ENCODE measurements at regions of chr7 and their contacts with region 1.

Region 1: GRCh38 chr7:104848138-104848990 is 165.6 kb upstream of the KMT2E start:
- DNase-seq: peak; percentile 7 to 67 (median 37)
- ATAC-seq: peak; percentile 34
- H3K4me3 ChIP-seq: no peak overlapping the region
- H3K4me3 Mint-ChIP-seq: no peak overlapping the region
- H3K27ac ChIP-seq: no peak overlapping the region
- H3K27ac Mint-ChIP-seq: no peak overlapping the region
- H3K4me1 ChIP-seq: no peaks in the 10 kb centered on the region
- H3K4me1 Mint-ChIP-seq: no peaks in the 10 kb centered on the region
- H3K27me3 ChIP-seq: no peaks in the 10 kb centered on the region
- H3K27me3 Mint-ChIP-seq: peaks cover 20% of the 10 kb centered on the region
- CTCF ChIP-seq: peak; percentile 86

Region 2: DNA sequence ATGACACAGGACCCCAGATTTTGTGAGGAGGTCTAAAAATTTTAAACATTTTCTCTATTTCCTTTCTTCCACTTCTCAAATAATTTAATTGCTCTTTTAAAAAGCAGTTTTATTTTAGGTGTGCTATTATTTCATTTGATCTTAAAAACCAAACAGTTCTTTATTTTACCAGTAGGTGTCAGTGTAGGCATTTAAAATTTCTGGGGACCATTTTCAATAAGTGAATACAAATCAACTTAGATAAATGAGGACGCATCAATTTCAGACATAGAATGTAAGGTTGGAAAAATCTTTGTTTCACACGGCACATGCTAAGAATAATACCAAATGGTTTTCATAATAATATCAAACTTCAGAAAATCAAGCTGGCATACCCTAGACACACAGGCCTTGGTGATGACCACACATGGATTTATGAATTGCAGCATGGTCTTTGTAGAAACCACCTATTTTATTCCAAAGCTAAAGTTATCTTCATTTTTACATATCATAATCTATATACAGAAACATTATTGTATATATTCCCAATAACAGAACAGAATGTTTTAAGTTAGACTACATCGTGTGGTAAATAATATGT is 1274.8 kb before region 1 on chr7:
- CTCF ChIA-PET with region 1: no interaction called
- POLR2A ChIA-PET with region 1: no interaction called
- intact Hi-C with region 1: loop called (anchors 5 kb)
- DNase-seq: peak in 3 of 14 experiments; percentile 30 to 46 (median 41)
- ATAC-seq: no peak
- H3K4me3 ChIP-seq: no peak overlapping the region
- H3K4me3 Mint-ChIP-seq: no peak overlapping the region
- H3K27ac ChIP-seq: no peak overlapping the region
- H3K27ac Mint-ChIP-seq: no peak overlapping the region
- H3K4me1 ChIP-seq: no peaks in the 10 kb centered on the region
- H3K4me1 Mint-ChIP-seq: no peaks in the 10 kb centered on the region
- H3K27me3 ChIP-seq: peaks cover 0 to 4% of the 10 kb centered on the region in 2 experiments
- H3K27me3 Mint-ChIP-seq: peaks cover 38% of the 10 kb centered on the region
- CTCF ChIP-seq: peak; percentile 69

Region 3: DNA sequence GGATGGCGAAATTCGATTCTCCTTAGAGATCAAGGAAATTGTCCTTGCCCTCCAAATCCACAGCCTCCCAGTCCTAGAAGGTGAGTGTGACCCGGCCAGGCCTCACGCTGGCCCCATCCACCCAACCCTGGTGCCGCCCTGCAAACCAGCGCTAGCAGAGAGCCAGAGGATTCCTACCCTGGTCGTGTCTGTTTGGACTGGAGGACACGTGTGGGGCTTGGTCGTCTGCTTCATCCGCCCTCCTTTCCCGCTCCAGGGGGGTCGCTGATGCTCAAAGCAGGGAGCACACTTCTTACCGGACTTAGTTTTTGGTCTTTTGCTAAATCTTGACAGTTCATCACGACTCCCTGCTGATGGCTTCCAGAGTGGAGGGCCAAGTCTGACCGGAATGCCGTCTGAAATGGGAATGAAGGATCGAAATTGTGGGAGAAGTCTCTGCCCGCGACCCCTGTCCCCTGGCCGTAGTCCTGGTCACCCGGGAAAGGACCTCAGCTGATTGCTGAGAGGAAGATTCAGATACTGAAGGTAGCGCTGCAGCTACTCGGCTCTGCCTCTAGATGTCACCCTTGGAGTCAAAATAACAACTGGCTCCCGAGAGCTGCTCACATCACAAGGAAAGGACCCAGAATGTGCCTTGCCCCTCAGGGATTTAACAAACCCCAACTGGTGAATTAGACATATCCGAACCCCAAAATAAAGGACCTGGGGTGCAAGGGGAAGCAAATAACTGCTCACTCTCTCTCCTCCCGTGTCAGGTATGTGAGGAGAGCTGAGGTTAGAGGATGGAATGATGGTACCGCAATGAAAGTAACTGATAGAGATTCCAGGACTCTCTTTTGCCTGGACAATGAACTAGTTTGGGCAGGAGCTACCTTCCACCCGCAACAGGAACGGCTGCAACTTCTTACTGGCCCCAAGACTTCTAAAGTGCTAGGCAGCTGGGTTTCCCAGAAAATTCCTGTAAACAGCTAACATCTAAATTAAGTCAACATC is 617.0 kb before region 1 on chr7:
- CTCF ChIA-PET with region 1: no interaction called
- POLR2A ChIA-PET with region 1: no interaction called
- intact Hi-C with region 1: loop called (anchors 1 to 2 kb)
- DNase-seq: peak in 11 of 14 experiments; percentile 7 to 64 (median 18)
- ATAC-seq: peak; percentile 75
- H3K4me3 ChIP-seq: no peak overlapping the region
- H3K4me3 Mint-ChIP-seq: no peak overlapping the region
- H3K27ac ChIP-seq: no peak overlapping the region
- H3K27ac Mint-ChIP-seq: no peak overlapping the region
- H3K4me1 ChIP-seq: peaks cover 6% of the 10 kb centered on the region
- H3K4me1 Mint-ChIP-seq: no peaks in the 10 kb centered on the region
- H3K27me3 ChIP-seq: peaks cover 3 to 16% of the 10 kb centered on the region in 2 experiments
- H3K27me3 Mint-ChIP-seq: peaks cover 36% of the 10 kb centered on the region
- CTCF ChIP-seq: peak; percentile 84

Region 4: DNA sequence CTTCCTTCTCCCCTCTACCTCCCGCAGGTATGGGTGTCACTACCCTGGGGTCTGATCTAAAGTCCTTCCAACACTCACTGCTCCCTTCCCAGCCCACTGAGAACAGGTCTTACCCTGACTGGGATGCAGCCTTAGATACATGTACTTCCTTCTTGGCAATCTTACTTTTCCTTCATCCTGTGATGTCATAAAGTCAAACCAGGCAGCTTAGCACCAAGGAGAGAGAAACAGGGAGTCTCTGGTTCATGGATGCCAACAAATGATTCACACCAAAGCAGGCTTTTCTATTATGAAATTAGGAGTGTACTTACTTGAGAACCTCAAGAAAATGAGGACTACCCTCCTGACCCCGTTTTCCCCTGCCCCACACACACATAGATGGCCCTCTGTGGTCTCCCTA is 54.7 kb after region 1 on chr7:
- CTCF ChIA-PET with region 1: no interaction called
- POLR2A ChIA-PET with region 1: no interaction called
- intact Hi-C with region 1: no loop called
- DNase-seq: no peak
- ATAC-seq: no peak
- H3K4me3 ChIP-seq: no peak overlapping the region
- H3K4me3 Mint-ChIP-seq: no peak overlapping the region
- H3K27ac ChIP-seq: no peak overlapping the region
- H3K27ac Mint-ChIP-seq: no peak overlapping the region
- H3K4me1 ChIP-seq: no peaks in the 10 kb centered on the region
- H3K4me1 Mint-ChIP-seq: no peaks in the 10 kb centered on the region
- H3K27me3 ChIP-seq: no peaks in the 10 kb centered on the region
- H3K27me3 Mint-ChIP-seq: peaks cover 7% of the 10 kb centered on the region
- CTCF ChIP-seq: no peak

Measured in CD4-positive, alpha-beta T cell (primary cell).